Naive thymus-derived CD4-positive, alpha-beta T cell (primary cell): ENCODE measurements at regions of chr18 and their contacts with region 1.

Region 1: GRCh38 chr18:59823596-59824195 is 76.1 kb upstream of the PMAIP1 start:
- DNase-seq: peak in 1 of 9 donors; percentile 34
- ATAC-seq: no peak
- H3K4me3 ChIP-seq: no peak overlapping the region
- H3K4me3 Mint-ChIP-seq: no peak overlapping the region
- H3K27ac ChIP-seq: no peak overlapping the region
- H3K27ac Mint-ChIP-seq: no peak overlapping the region
- H3K4me1 ChIP-seq: no peaks in the 10 kb centered on the region
- H3K4me1 Mint-ChIP-seq: peaks cover 0 to 2% (median 0%) of the 10 kb centered on the region in 7 donors
- H3K27me3 ChIP-seq: no peaks in the 10 kb centered on the region
- H3K27me3 Mint-ChIP-seq: peaks cover 4 to 16% (median 11%) of the 10 kb centered on the region in 5 donors

Region 2: DNA sequence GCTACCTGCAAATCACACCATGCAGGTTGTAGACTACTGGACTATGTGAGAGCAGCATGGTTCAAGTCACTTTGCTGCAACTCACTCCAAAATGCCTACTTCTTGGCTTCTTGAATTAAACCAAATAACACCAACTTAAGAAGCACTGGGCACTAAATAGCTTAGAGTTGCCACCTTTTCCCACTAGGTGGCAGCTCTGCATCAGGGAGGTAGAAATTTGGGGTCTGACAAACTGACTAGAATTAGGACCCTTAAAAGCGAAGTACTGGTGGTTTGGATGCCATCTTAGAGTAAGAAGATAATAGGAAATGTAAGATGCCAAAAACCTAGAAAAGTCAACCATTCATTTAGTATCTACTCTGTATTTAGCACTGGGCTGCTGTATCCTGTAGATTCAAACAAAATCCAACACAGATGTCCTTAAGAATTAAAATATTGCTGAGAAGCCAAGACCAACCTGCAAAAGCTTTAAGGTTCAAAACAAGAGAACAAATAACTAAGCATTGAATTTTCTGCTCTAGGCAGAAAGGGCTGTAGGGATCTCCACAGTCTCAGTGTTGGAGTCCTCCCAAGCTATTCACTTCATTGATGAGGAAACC is 192.0 kb before region 1 on chr18:
- CTCF ChIA-PET with region 1: no interaction called
- POLR2A ChIA-PET with region 1: no interaction called
- intact Hi-C with region 1: loop called in 1 of 2 experiments (anchors 1 kb)
- DNase-seq: no peak
- ATAC-seq: no peak
- H3K4me3 ChIP-seq: no peak overlapping the region
- H3K4me3 Mint-ChIP-seq: no peak overlapping the region
- H3K27ac ChIP-seq: no peak overlapping the region
- H3K27ac Mint-ChIP-seq: no peak overlapping the region
- H3K4me1 ChIP-seq: no peaks in the 10 kb centered on the region
- H3K4me1 Mint-ChIP-seq: no peaks in the 10 kb centered on the region
- H3K27me3 ChIP-seq: no peaks in the 10 kb centered on the region
- H3K27me3 Mint-ChIP-seq: peaks cover 0 to 20% (median 17%) of the 10 kb centered on the region in 5 donors

Region 3: GRCh38 chr18:59697236-59697932 is 126.3 kb before region 1 on chr18 and contains the start of gene CCBE1:
- CTCF ChIA-PET with region 1: no interaction called
- POLR2A ChIA-PET with region 1: no interaction called
- intact Hi-C with region 1: loop called in 1 of 2 experiments (anchors 1 kb)
- DNase-seq: peak in 1 of 9 donors; percentile 70
- ATAC-seq: no peak
- H3K4me3 ChIP-seq: no peak within 1 kb of the TSS
- H3K4me3 Mint-ChIP-seq: peak within 1 kb of the TSS in 8 of 10 donors; percentile 13 to 62 (median 36)
- H3K27ac ChIP-seq: no peak within 1 kb of the TSS
- H3K27ac Mint-ChIP-seq: no peak within 1 kb of the TSS
- H3K4me1 ChIP-seq: no peaks in the 10 kb centered on the region
- H3K4me1 Mint-ChIP-seq: peaks cover 0 to 12% (median 6%) of the 10 kb centered on the region in 7 donors
- H3K27me3 ChIP-seq: peaks cover 0 to 8% of the 10 kb centered on the region in 2 donors
- H3K27me3 Mint-ChIP-seq: peaks cover 43 to 66% (median 49%) of the 10 kb centered on the region in 5 donors
- total RNA-seq, gene CCBE1: not detected

Region 4: DNA sequence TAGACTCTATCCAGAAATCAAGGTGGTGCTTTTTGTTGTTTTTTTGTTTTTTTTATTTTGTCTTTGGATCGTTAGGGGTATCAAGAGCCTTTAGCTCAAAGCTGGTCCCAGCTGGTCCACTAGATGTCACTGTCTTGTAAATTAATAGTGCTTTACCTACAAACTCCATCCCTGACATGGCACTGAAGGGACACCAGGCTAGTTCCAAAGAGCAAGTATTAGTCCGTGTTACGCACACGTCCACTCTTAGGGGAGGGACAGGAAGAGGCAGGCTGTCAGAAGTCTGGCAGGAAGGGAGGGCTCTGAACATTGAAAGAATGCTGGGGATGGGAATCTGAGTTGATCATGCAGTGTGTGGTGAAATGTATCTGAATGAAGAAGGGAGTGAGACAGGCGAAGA is 40.6 kb before region 1 on chr18:
- CTCF ChIA-PET with region 1: no interaction called
- POLR2A ChIA-PET with region 1: no interaction called
- intact Hi-C with region 1: loop called in 1 of 2 experiments (anchors 5 kb)
- DNase-seq: no peak
- ATAC-seq: no peak
- H3K4me3 ChIP-seq: no peak overlapping the region
- H3K4me3 Mint-ChIP-seq: no peak overlapping the region
- H3K27ac ChIP-seq: no peak overlapping the region
- H3K27ac Mint-ChIP-seq: no peak overlapping the region
- H3K4me1 ChIP-seq: no peaks in the 10 kb centered on the region
- H3K4me1 Mint-ChIP-seq: no peaks in the 10 kb centered on the region
- H3K27me3 ChIP-seq: no peaks in the 10 kb centered on the region
- H3K27me3 Mint-ChIP-seq: peaks cover 0 to 10% (median 9%) of the 10 kb centered on the region in 5 donors